Activated CD4-positive, alpha-beta memory T cell treated with anti-CD3 and anti-CD28 coated beads for 36 hours (primary cell): ENCODE measurements at regions of chr17 and their contacts with region 1.

Region 1: GRCh38 chr17:81018044-81018802 is 16.7 kb upstream of the BAIAP2 start:
- DNase-seq: peak; percentile 45
- H3K4me3 Mint-ChIP-seq: peak overlapping the region; percentile 53
- H3K27ac Mint-ChIP-seq: peak overlapping the region; percentile 67
- H3K4me1 Mint-ChIP-seq: peaks cover 14% of the 10 kb centered on the region
- H3K27me3 Mint-ChIP-seq: no peaks in the 10 kb centered on the region

Region 2: GRCh38 chr17:80805032-80805751 is 213.0 kb before region 1 on chr17:
- CTCF ChIA-PET with region 1: no interaction called
- POLR2A ChIA-PET with region 1: no interaction called
- intact Hi-C with region 1: no loop called
- DNase-seq: peak; percentile 3
- H3K4me3 Mint-ChIP-seq: no peak overlapping the region
- H3K27ac Mint-ChIP-seq: peak overlapping the region; percentile 6
- H3K4me1 Mint-ChIP-seq: peaks cover 20% of the 10 kb centered on the region
- H3K27me3 Mint-ChIP-seq: no peaks in the 10 kb centered on the region

Region 3: DNA sequence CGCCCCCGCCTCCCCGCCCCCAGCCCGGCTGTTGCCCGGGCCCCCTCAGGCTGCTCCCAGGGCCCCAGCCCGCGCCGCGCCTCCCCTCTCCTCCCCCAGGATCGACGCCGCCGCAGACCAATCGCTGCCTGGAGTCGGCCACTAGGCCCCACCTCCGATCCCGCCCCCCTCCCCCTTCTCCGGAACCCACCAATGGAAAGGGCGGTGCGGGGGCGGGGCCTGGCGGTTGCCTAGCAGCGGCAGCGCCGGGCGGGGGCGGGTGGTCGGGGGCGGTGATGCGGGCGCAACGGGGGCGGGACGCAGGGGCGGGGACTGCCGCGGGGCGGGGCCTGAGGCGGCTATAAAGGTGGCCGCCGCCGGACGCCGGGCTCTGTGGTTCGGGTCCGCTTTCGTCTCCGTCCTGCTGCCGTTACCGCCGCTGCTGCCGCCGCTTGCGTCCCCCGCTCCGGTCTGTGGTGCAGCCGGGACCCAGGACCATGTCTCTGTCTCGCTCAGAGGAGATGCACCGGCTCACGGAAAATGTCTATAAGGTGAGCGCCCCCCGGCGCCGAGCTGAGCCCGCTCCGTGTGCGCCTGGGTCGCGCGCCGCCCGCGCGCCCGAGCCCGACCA is 16.7 kb after region 1 on chr17 and contains the start of gene BAIAP2:
- CTCF ChIA-PET with region 1: interaction called, 19 read pairs
- POLR2A ChIA-PET with region 1: no interaction called
- intact Hi-C with region 1: no loop called
- DNase-seq: peak; percentile 96
- H3K4me3 Mint-ChIP-seq: peak within 1 kb of the TSS; percentile 79
- H3K27ac Mint-ChIP-seq: no peak within 1 kb of the TSS
- H3K4me1 Mint-ChIP-seq: peaks cover 10% of the 10 kb centered on the region
- H3K27me3 Mint-ChIP-seq: peaks cover 13% of the 10 kb centered on the region
- total RNA-seq, gene BAIAP2: 3.3 to 3.6 TPM

Region 4: GRCh38 chr17:81040791-81041337 is 22.6 kb after region 1 on chr17:
- CTCF ChIA-PET with region 1: interaction called, 19 read pairs
- POLR2A ChIA-PET with region 1: no interaction called
- intact Hi-C with region 1: no loop called
- DNase-seq: peak; percentile 30
- H3K4me3 Mint-ChIP-seq: no peak overlapping the region
- H3K27ac Mint-ChIP-seq: no peak overlapping the region
- H3K4me1 Mint-ChIP-seq: peaks cover 1% of the 10 kb centered on the region
- H3K27me3 Mint-ChIP-seq: peaks cover 4% of the 10 kb centered on the region

Region 5: GRCh38 chr17:81094509-81095382 is 76.5 kb after region 1 on chr17:
- CTCF ChIA-PET with region 1: interaction called, 27 read pairs
- POLR2A ChIA-PET with region 1: interaction called, 3 read pairs
- intact Hi-C with region 1: loop called (anchors 1 kb)
- DNase-seq: peak; percentile 97
- H3K4me3 Mint-ChIP-seq: no peak overlapping the region
- H3K27ac Mint-ChIP-seq: peak overlapping the region; percentile 75
- H3K4me1 Mint-ChIP-seq: peaks cover 46% of the 10 kb centered on the region
- H3K27me3 Mint-ChIP-seq: no peaks in the 10 kb centered on the region

Region 6: DNA sequence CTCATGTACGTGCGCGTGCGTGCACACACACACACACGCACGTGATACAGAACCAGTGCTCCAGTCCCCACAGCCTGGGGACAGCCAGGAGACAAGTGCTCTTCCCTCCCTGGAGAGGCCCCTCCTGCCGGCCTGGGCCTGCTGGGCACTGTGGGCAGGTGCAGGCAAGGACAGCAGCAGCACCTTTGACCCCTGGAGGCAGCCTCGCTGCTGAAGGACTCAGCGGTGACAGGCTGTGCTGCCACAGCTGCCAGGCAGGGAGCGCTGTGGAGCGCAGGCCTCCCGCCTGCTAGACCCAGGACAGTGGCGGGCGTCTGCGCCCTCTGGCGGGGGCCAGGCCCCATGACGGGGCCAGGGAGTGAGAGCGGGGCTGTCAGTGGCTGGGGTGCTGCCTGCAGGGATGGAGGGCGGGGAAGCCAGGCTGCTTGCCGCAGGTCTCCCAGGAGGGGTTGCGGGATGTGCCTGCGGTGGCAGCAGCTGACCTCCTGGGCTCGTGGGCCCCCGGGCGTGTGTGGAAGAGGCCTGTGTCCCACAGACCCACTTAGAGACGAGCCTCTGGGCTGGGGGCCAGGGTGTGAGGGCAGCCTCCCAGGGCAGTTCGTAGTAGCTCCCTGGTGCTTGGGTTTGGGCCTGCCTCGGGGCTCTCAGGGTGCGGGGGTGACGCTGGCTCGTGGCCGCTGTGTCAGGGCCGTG is 83.5 kb after region 1 on chr17:
- CTCF ChIA-PET with region 1: interaction called, 87 read pairs
- POLR2A ChIA-PET with region 1: no interaction called
- intact Hi-C with region 1: loop called (anchors 1 kb)
- DNase-seq: peak; percentile 91
- H3K4me3 Mint-ChIP-seq: no peak overlapping the region
- H3K27ac Mint-ChIP-seq: no peak overlapping the region
- H3K4me1 Mint-ChIP-seq: peaks cover 15% of the 10 kb centered on the region
- H3K27me3 Mint-ChIP-seq: no peaks in the 10 kb centered on the region